ENCODE measurements at regions of chr17 and their contacts with region 1.

Region 1: GRCh38 chr17:57783106-57783742 is 38.1 kb upstream of the CCDC182 start:
- DNase-seq: peak; percentile 80
- ATAC-seq: peak; percentile 95
- H3K4me3 Mint-ChIP-seq: no peak overlapping the region
- H3K27ac Mint-ChIP-seq: no peak overlapping the region
- H3K4me1 Mint-ChIP-seq: no peaks in the 10 kb centered on the region
- H3K27me3 Mint-ChIP-seq: peaks cover 38% of the 10 kb centered on the region

Region 2: GRCh38 chr17:57597531-57598453 is 185.4 kb before region 1 on chr17:
- CTCF ChIA-PET with region 1: interaction called, 10 read pairs
- DNase-seq: peak; percentile 57
- ATAC-seq: no peak
- H3K4me3 Mint-ChIP-seq: no peak overlapping the region
- H3K27ac Mint-ChIP-seq: peak overlapping the region; percentile 98
- H3K4me1 Mint-ChIP-seq: peaks cover 57% of the 10 kb centered on the region
- H3K27me3 Mint-ChIP-seq: no peaks in the 10 kb centered on the region

Region 3: DNA sequence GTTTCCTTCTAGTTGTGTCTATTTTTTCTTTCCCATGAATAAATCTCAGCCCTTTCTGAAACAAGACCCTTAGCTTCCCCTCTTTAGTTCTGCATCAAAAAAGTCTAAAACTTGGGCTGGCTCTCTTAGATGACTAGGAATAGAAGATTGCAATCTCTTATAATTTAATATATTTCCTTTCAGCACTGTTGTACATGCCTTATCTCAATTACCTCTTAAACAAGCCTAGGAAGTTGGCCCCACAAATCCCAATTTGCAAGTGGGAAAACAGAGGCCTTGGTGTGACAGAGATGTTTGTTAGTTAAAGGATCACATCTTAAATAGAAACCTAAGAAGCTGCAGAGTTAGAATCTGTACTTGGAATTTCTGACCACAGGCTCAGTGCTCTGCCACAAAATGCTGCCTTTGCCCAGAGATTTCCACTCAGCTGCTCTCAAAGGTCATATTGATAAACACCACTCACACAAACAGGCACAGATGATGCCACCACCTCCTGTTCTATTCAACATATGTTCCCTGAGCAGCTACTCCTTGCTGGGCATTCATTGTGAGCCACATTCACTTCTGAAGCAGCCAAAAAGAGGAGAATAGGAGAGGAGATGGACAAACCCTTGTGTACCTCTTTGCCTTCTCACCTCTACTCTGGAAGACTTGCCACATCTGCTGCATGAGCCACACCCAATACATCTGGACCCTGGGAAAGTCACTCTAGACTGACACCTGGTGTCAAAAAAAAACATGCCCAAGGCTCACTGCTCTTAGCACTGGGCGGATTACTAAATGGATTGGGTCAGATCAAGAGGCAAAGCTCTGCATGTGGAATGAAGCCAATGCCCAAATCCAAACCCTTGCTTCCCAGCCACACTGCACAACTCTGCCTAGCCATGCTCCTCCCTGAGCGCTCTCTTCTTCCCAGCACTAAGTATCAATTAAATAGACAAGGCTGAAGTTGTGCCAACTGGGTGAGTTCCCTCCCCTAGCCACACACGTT is 43.5 kb before region 1 on chr17:
- CTCF ChIA-PET with region 1: interaction called, 11 read pairs
- DNase-seq: no peak
- ATAC-seq: peak; percentile 89
- H3K4me3 Mint-ChIP-seq: no peak overlapping the region
- H3K27ac Mint-ChIP-seq: no peak overlapping the region
- H3K4me1 Mint-ChIP-seq: peaks cover 11% of the 10 kb centered on the region
- H3K27me3 Mint-ChIP-seq: peaks cover 25% of the 10 kb centered on the region

Region 4: GRCh38 chr17:57794841-57795240 is 11.6 kb after region 1 on chr17:
- CTCF ChIA-PET with region 1: interaction called, 15 read pairs
- DNase-seq: no peak
- ATAC-seq: no peak
- H3K4me3 Mint-ChIP-seq: no peak overlapping the region
- H3K27ac Mint-ChIP-seq: no peak overlapping the region
- H3K4me1 Mint-ChIP-seq: no peaks in the 10 kb centered on the region
- H3K27me3 Mint-ChIP-seq: peaks cover 38% of the 10 kb centered on the region

Region 5: GRCh38 chr17:57833179-57833939 is 50.1 kb after region 1 on chr17:
- CTCF ChIA-PET with region 1: interaction called, 35 read pairs
- DNase-seq: peak; percentile 82
- ATAC-seq: peak; percentile 78
- H3K4me3 Mint-ChIP-seq: no peak overlapping the region
- H3K27ac Mint-ChIP-seq: no peak overlapping the region
- H3K4me1 Mint-ChIP-seq: peaks cover 4% of the 10 kb centered on the region
- H3K27me3 Mint-ChIP-seq: no peaks in the 10 kb centered on the region

Region 6: GRCh38 chr17:57849874-57850754 is 66.9 kb after region 1 on chr17 and contains the start of gene MRPS23:
- CTCF ChIA-PET with region 1: no interaction called
- DNase-seq: peak; percentile 99
- ATAC-seq: peak; percentile 93
- H3K4me3 Mint-ChIP-seq: peak within 1 kb of the TSS; percentile 97
- H3K27ac Mint-ChIP-seq: peak within 1 kb of the TSS; percentile 100
- H3K4me1 Mint-ChIP-seq: peaks cover 37% of the 10 kb centered on the region
- H3K27me3 Mint-ChIP-seq: no peaks in the 10 kb centered on the region
- total RNA-seq, gene MRPS23: 39.4 to 49.4 TPM

Region 7: GRCh38 chr17:57927048-57927723 is 144.0 kb after region 1 on chr17:
- CTCF ChIA-PET with region 1: no interaction called
- DNase-seq: no peak
- ATAC-seq: no peak
- H3K4me3 Mint-ChIP-seq: no peak overlapping the region
- H3K27ac Mint-ChIP-seq: no peak overlapping the region
- H3K4me1 Mint-ChIP-seq: peaks cover 12% of the 10 kb centered on the region
- H3K27me3 Mint-ChIP-seq: peaks cover 69% of the 10 kb centered on the region

Region 8: GRCh38 chr17:57955183-57955931 is 172.1 kb after region 1 on chr17 and contains the start of gene CUEDC1:
- CTCF ChIA-PET with region 1: no interaction called
- DNase-seq: peak; percentile 64
- ATAC-seq: peak; percentile 74
- H3K4me3 Mint-ChIP-seq: peak within 1 kb of the TSS; percentile 34
- H3K27ac Mint-ChIP-seq: no peak within 1 kb of the TSS
- H3K4me1 Mint-ChIP-seq: peaks cover 34% of the 10 kb centered on the region
- H3K27me3 Mint-ChIP-seq: peaks cover 58% of the 10 kb centered on the region
- total RNA-seq, gene CUEDC1: not detected

Measured in activated CD8-positive, alpha-beta memory T cell treated with anti-CD3 and anti-CD28 coated beads, Interleukin-2, amount 10 ng/mL, durations not matched to agents 7 days and 5 days (primary cell).